Psoas muscle (tissue), 8 donors: ENCODE measurements at regions of chr10 and their contacts with region 1.

Region 1: DNA sequence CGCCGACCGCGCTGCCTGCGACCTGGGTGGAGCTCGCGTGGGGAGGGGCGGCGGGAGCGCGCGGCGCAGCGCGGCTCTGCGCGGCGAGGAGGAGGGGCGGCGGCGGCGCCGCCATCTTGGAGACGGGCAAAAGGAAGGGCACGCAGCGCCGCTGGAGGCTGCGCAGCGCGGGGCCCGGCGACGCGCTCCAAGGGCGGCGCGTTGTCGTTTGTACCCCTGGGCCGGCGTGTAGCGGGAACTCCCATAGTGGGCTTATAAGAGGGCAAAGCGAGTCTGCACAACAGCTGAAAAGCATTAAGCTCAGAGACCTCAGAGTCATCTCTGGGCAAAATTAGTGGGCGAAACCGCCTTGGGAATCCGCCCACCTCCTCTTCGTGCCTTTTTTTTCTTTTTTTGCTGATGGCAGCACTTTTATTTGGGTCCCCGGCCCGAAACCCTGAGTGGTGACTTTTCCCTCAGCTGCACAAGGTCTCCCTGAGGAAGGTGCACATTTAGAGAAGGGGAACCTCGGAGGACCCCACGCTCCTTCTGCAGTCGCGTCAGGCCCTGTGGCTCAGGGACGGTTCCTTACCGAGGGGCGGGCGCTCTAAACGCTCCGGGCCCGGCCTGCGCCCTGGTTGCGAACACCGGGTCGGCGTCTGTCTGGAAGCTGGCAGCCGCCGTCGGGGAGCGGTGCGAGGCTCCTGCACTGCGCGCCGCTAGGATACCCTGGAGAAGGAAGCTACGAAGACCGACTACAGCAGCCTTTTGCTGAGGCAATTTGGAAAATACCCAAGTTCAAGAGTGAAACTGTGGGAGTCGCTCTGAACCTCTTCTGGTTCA is 428 bp upstream of the MCMBP start:
- DNase-seq: peak; percentile 89 to 94
- ATAC-seq: peak; percentile 96 to 98 (median 97)
- H3K4me3 ChIP-seq: peak overlapping the region; percentile 75
- H3K27ac ChIP-seq: peak overlapping the region; percentile 84
- H3K4me1 ChIP-seq: peaks cover 23% of the 10 kb centered on the region
- H3K27me3 ChIP-seq: no peaks in the 10 kb centered on the region
- CTCF ChIP-seq: no peak

Region 2: GRCh38 chr10:119834188-119834587 is 38.9 kb before region 1 on chr10:
- intact Hi-C with region 1: no loop called
- DNase-seq: no peak
- ATAC-seq: no peak
- H3K4me3 ChIP-seq: no peak overlapping the region
- H3K27ac ChIP-seq: no peak overlapping the region
- H3K4me1 ChIP-seq: no peaks in the 10 kb centered on the region
- H3K27me3 ChIP-seq: no peaks in the 10 kb centered on the region
- CTCF ChIP-seq: no peak

Region 3: DNA sequence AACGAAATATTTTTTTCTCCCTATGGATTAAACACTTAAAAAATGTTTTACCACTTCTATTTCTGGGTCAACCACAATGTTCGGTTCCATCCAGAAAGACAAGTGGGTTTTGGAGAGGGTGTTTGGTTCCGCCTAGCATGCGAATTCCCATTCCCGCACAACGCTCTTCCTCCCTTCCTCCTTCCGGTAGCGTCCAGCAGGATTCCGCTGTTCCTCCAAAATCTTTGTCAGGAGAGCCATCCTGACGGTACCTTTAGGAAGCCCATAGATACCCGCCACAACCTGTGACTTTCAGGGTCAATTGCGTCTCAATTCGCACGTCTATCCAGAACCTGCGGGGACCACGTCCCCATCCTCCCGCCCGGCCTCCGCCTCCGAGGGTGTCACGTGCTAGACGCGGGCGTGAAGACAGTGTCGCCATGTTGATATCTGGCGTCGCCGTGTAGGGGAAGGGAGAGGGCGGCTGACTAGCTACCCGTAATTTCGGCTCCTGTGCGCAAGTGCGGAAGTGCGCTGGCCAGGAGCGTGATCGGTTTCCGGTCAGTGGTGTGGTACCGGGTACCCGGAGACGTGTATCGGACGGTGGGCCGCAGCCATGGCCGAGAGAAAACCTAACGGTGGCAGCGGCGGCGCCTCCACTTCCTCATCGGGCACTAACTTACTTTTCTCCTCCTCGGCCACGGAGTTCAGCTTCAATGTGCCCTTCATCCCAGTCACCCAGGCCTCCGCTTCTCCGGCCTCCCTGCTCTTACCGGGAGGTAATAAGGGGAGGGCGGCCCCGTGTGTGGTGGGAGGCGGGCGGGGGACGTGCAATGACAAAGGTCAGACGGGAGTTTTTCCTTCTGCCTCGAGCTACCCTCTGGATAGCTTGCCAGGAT is 19.4 kb after region 1 on chr10 and contains the start of gene SEC23IP:
- intact Hi-C with region 1: loop called (anchors 1 kb)
- DNase-seq: peak; percentile 97 to 98
- ATAC-seq: peak; percentile 99 to 100 (median 99)
- H3K4me3 ChIP-seq: peak within 1 kb of the TSS; percentile 84
- H3K27ac ChIP-seq: peak within 1 kb of the TSS; percentile 88
- H3K4me1 ChIP-seq: peaks cover 33% of the 10 kb centered on the region
- H3K27me3 ChIP-seq: no peaks in the 10 kb centered on the region
- CTCF ChIP-seq: no peak
- total RNA-seq, gene SEC23IP: 27.3 to 49.7 (median 45.4) TPM